Aorta (tissue), 5 donors: ENCODE measurements at regions of chr2 and their contacts with region 1.

Region 1: GRCh38 chr2:44955593-44956392 is 14.3 kb downstream of the SIX3 start:
- DNase-seq: peak; percentile 77 to 93
- ATAC-seq: peak; percentile 89
- H3K4me3 ChIP-seq: no peak overlapping the region
- H3K27ac ChIP-seq: no peak overlapping the region
- H3K4me1 ChIP-seq: no peaks in the 10 kb centered on the region
- H3K27me3 ChIP-seq: no peaks in the 10 kb centered on the region

Region 2: GRCh38 chr2:44044281-44044720 is 911.5 kb before region 1 on chr2:
- intact Hi-C with region 1: loop called (anchors 2 to 5 kb)
- DNase-seq: peak; percentile 91 to 95
- ATAC-seq: peak; percentile 94
- H3K4me3 ChIP-seq: no peak overlapping the region
- H3K27ac ChIP-seq: no peak overlapping the region
- H3K4me1 ChIP-seq: no peaks in the 10 kb centered on the region
- H3K27me3 ChIP-seq: no peaks in the 10 kb centered on the region

Region 3: GRCh38 chr2:44392338-44392943 is 563.4 kb before region 1 on chr2:
- intact Hi-C with region 1: loop called (anchors 10 kb)
- DNase-seq: peak in 1 of 2 donors; percentile 54
- ATAC-seq: no peak
- H3K4me3 ChIP-seq: no peak overlapping the region
- H3K27ac ChIP-seq: no peak overlapping the region
- H3K4me1 ChIP-seq: no peaks in the 10 kb centered on the region
- H3K27me3 ChIP-seq: no peaks in the 10 kb centered on the region

Region 4: DNA sequence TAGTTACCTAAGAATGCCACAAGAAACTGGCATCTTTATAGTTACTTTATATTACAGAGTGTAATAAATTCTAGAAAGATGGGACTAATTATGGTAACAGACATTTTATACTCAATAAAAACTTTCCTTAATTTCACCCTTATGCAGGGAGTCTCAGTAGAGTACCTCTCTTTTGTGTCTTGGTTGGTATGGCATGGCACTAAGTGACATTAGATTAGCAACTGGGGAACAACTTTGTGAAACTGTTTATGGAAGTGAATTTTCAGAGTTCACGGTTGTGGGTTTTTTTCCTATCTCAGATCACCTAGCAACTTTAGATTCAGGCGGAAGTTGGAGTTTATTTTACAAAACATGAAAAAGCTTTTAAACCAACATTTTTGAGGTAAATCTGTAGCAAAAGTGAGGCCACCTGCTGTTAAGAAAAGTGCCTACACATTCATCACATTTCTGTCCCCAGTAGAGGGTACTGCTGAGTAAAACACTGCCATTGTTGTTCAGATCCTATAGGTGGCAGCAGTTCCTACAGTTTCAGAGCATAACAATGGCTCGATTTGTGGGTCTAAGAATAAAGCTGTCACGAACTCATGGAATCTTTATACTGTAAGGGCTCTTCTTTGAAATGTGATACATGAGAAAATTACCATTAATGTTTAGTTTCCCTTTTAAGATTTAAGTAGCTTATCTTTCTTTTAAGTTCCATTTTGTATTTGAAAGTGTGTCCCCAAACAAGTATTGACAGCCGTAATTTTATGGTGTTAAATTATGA is 476.5 kb before region 1 on chr2:
- intact Hi-C with region 1: loop called (anchors 5 kb)
- DNase-seq: no peak
- ATAC-seq: peak; percentile 87
- H3K4me3 ChIP-seq: no peak overlapping the region
- H3K27ac ChIP-seq: no peak overlapping the region
- H3K4me1 ChIP-seq: no peaks in the 10 kb centered on the region
- H3K27me3 ChIP-seq: no peaks in the 10 kb centered on the region

Region 5: DNA sequence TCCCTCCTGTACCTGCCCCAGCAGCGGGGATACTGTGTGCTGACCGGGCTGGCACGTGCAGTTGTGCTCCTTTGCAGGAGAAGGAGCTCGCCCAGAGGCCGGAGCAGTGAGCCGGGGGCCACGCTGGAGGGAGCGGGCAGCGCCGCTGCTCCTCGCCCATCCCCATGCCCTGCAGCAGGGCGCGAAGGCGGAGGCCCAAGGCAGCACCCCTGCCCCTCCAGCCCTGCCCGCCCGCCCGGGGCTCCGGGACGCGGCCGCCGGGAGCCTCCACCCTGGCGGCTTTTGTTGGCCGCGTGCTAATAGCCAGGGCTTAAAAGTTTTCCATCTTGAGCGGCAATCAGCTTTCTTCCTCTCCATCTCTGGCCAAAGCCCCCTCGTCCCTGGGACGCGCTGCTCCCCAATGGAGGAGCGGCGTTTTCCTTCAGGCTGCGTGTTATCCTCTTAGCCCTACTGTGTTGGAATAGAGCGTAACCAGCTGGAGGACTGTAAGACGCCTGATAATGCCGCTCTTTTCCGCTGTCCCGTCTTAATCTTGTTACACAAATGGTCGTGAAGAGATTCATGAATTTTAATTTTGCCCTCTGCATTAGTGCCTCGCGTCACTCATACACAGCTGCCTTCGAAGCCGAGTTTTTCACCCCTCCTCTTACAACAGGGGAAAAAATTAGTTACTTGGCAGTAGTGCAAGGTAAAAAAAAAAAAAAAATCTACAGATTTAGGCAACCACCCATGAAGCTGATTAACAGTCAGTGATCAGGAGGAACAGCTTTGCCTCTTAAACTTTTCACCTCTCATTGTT is 187.2 kb before region 1 on chr2:
- intact Hi-C with region 1: no loop called
- DNase-seq: no peak
- ATAC-seq: peak; percentile 45
- H3K4me3 ChIP-seq: no peak overlapping the region
- H3K27ac ChIP-seq: no peak overlapping the region
- H3K4me1 ChIP-seq: no peaks in the 10 kb centered on the region
- H3K27me3 ChIP-seq: no peaks in the 10 kb centered on the region

Region 6: DNA sequence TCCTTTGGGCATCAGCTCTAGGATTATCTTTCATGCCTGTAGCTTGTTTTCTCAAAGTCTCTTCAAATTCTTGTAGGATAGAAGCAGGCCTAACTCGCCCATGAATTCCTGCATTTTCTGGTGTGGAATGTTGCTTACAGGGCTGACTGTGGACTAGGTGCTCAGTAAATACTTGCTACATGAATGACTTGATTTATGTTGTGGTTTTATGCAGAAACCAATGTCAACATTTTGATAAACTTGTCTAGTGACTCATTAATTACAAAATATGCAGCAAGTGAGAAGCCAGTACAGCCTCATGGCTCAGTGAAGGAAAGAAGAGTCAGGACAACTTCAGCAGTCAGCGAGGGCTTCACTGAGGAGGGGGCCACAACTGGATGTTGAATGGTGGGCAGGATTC is 164.1 kb after region 1 on chr2:
- intact Hi-C with region 1: no loop called
- DNase-seq: no peak
- ATAC-seq: no peak
- H3K4me3 ChIP-seq: no peak overlapping the region
- H3K27ac ChIP-seq: no peak overlapping the region
- H3K4me1 ChIP-seq: no peaks in the 10 kb centered on the region
- H3K27me3 ChIP-seq: no peaks in the 10 kb centered on the region

Region 7: GRCh38 chr2:45778720-45779171 is 823.0 kb after region 1 on chr2:
- intact Hi-C with region 1: no loop called
- DNase-seq: peak in 1 of 2 donors; percentile 72
- ATAC-seq: peak; percentile 72
- H3K4me3 ChIP-seq: no peak overlapping the region
- H3K27ac ChIP-seq: no peak overlapping the region
- H3K4me1 ChIP-seq: no peaks in the 10 kb centered on the region
- H3K27me3 ChIP-seq: no peaks in the 10 kb centered on the region